ENCODE measurements at regions of chr7 and their contacts with region 1.

Region 1: GRCh38 chr7:141654551-141654950 is 47.4 kb downstream of the DENND11 start:
- DNase-seq: peak; percentile 70
- ATAC-seq: peak; percentile 94
- H3K4me3 ChIP-seq: no peak overlapping the region
- H3K27ac ChIP-seq: no peak overlapping the region
- H3K4me1 ChIP-seq: no peaks in the 10 kb centered on the region
- H3K27me3 ChIP-seq: no peaks in the 10 kb centered on the region
- CTCF ChIP-seq: peak; percentile 89
- EP300 ChIP-seq: no peak
- POLR2A ChIP-seq: no peak
- RAD21 ChIP-seq: peak; percentile 62; the same call in 1 of the 2 replicates

Region 2: DNA sequence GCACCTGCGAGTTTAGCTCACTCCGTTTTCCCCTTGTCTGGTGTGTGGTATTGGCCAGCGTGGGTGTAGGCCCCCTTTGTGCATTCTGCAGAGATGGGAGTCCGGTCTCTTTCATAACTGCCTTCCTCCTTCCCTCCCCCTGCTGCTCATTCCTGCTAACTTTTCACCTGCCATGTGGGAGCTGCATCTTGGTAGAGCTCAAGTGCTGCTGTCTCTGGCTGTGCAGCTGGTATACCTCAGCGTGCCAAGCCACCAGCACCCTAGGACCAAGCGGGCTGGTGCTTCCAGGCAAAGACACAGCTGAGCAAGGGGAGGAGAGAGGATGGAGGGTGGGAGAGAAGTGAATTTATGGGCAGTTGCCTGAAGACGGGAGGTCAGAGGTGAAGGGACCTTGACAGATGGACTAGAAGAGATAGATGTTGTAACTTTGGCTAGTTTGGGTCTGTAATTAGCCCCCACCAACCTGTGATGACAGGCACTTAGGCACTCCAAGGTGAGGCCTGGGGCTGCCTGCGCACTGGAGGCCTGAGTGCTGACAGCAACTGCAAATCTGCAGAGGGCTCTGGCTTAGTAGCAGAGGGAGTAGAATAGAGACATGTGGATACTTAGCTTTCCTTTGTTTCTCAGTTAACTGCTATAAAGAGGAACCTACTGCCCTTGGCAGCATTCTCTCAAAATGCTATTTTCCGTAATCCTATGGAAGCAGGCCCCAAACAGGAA is 252.1 kb before region 1 on chr7:
- CTCF ChIA-PET with region 1: no interaction called
- POLR2A ChIA-PET with region 1: no interaction called
- in situ Hi-C with region 1: no loop called
- intact Hi-C with region 1: no loop called
- DNase-seq: no peak
- ATAC-seq: no peak
- H3K4me3 ChIP-seq: no peak overlapping the region
- H3K27ac ChIP-seq: no peak overlapping the region
- H3K4me1 ChIP-seq: no peaks in the 10 kb centered on the region
- H3K27me3 ChIP-seq: peaks cover 4 to 10% of the 10 kb centered on the region in 2 experiments; a peak in 3 of 5 replicates
- CTCF ChIP-seq: no peak
- EP300 ChIP-seq: no peak
- POLR2A ChIP-seq: no peak
- RAD21 ChIP-seq: no peak

Region 3: GRCh38 chr7:141533149-141533949 is 121.2 kb before region 1 on chr7:
- CTCF ChIA-PET with region 1: no interaction called
- POLR2A ChIA-PET with region 1: no interaction called
- in situ Hi-C with region 1: no loop called
- intact Hi-C with region 1: loop called (anchors 1 kb)
- DNase-seq: peak; percentile 47
- ATAC-seq: peak; percentile 86
- H3K4me3 ChIP-seq: no peak overlapping the region
- H3K27ac ChIP-seq: no peak overlapping the region
- H3K4me1 ChIP-seq: no peaks in the 10 kb centered on the region
- H3K27me3 ChIP-seq: peaks cover 0 to 5% of the 10 kb centered on the region in 2 experiments; a peak in 2 of 5 replicates
- CTCF ChIP-seq: peak; percentile 85
- EP300 ChIP-seq: no peak
- POLR2A ChIP-seq: no peak
- RAD21 ChIP-seq: peak; percentile 75

Region 4: DNA sequence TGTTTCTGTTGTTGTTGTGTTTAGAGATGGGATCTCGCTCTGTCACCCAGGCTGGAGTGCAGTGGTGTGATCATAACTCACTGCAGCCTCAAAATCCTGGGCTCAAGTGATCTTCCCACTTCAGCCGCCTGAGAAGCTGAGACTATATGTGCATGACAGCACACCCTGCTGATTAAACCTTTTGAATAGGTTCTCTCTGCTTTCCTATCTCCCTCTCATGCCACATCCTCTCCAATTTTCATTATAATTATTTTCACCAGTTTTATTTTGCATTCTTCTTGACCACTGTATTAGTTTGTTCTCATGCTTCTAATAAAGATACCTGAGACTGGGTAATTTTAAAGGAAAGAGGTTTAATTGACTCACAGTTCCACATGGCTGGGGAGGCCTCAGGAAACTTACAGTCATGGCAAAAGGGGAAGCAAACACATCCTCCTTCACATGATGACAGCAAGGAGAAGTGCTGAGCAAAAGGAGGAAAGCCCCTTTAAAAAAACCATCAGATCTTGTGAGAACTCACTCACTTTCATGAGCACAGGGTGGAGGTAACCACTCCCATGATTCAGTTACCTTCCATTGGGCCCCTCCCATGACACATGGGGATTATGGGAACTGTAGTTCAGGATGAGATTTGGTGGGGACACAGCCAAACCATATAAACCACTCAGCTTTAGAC is 90.5 kb before region 1 on chr7:
- CTCF ChIA-PET with region 1: no interaction called
- POLR2A ChIA-PET with region 1: no interaction called
- in situ Hi-C with region 1: no loop called
- intact Hi-C with region 1: no loop called
- DNase-seq: no peak
- ATAC-seq: no peak
- H3K4me3 ChIP-seq: no peak overlapping the region
- H3K27ac ChIP-seq: no peak overlapping the region
- H3K4me1 ChIP-seq: no peaks in the 10 kb centered on the region
- H3K27me3 ChIP-seq: no peaks in the 10 kb centered on the region
- CTCF ChIP-seq: no peak
- EP300 ChIP-seq: no peak
- POLR2A ChIP-seq: no peak
- RAD21 ChIP-seq: no peak

Region 5: DNA sequence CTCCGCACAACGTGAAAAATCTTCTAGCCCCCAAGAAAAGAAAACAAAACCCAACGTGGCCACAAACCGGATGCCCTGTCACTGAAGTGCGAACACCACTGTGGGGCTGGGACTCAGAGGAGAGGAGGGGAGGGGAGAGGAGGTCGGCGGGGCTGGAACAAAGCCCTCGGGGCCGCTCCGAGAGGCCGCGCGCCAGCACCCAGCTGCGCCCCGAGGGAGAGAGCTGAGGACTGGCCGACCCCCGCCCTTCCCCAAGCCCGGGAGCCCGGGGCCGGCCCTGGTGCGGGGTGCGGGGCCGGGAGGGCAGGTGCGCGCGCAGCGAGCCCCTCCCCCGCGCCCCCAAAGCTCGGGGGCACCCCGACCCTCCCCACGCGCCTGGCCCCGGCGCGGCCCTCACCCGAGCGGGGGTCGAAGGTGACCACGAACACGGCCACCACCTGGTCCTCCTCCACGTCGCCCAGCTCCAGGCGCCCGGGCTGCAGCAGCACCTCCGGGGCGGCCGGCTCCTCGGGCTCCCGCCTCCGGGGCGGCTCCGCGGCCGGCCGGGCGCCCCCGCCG is 47.0 kb after region 1 on chr7:
- CTCF ChIA-PET with region 1: no interaction called
- POLR2A ChIA-PET with region 1: interaction called, 3 read pairs
- in situ Hi-C with region 1: no loop called
- intact Hi-C with region 1: loop called (anchors 1 kb)
- DNase-seq: no peak
- ATAC-seq: peak; percentile 86
- H3K4me3 ChIP-seq: peak overlapping the region; percentile 72 to 85 (median 76); a peak in 5 of 6 replicates
- H3K27ac ChIP-seq: no peak overlapping the region
- H3K4me1 ChIP-seq: peaks cover 49% of the 10 kb centered on the region
- H3K27me3 ChIP-seq: peaks cover 0 to 19% of the 10 kb centered on the region in 2 experiments; a peak in 3 of 5 replicates
- CTCF ChIP-seq: no peak
- EP300 ChIP-seq: no peak
- POLR2A ChIP-seq: peak in 1 of 2 experiments; percentile 10; a peak in 2 of 4 replicates
- RAD21 ChIP-seq: no peak

Region 6: GRCh38 chr7:141710301-141710700 is 55.8 kb after region 1 on chr7:
- CTCF ChIA-PET with region 1: interaction called, 3 read pairs
- POLR2A ChIA-PET with region 1: no interaction called
- in situ Hi-C with region 1: no loop called
- intact Hi-C with region 1: loop called (anchors 1 kb)
- DNase-seq: no peak
- ATAC-seq: no peak
- H3K4me3 ChIP-seq: no peak overlapping the region
- H3K27ac ChIP-seq: no peak overlapping the region
- H3K4me1 ChIP-seq: peaks cover 10% of the 10 kb centered on the region
- H3K27me3 ChIP-seq: peaks cover 0 to 3% of the 10 kb centered on the region in 2 experiments; a peak in 2 of 5 replicates
- CTCF ChIP-seq: no peak
- EP300 ChIP-seq: no peak
- POLR2A ChIP-seq: no peak
- RAD21 ChIP-seq: no peak

Region 7: GRCh38 chr7:141737834-141738591 is 83.5 kb after region 1 on chr7 and contains the start of gene SSBP1:
- CTCF ChIA-PET with region 1: interaction called, 16 read pairs
- POLR2A ChIA-PET with region 1: no interaction called
- in situ Hi-C with region 1: loop called (anchors 10 kb)
- intact Hi-C with region 1: loop called (anchors 1 kb)
- DNase-seq: peak; percentile 94
- ATAC-seq: peak; percentile 95
- H3K4me3 ChIP-seq: peak within 1 kb of the TSS; percentile 84 to 93 (median 85)
- H3K27ac ChIP-seq: peak within 1 kb of the TSS; percentile 81
- H3K4me1 ChIP-seq: peaks cover 29% of the 10 kb centered on the region
- H3K27me3 ChIP-seq: no peaks in the 10 kb centered on the region; a peak in 1 of 5 replicates
- CTCF ChIP-seq: peak; percentile 84
- EP300 ChIP-seq: peak; percentile 48 to 70; a peak in 2 of 4 replicates
- POLR2A ChIP-seq: peak; percentile 94 to 97
- RAD21 ChIP-seq: no peak
- total RNA-seq, gene SSBP1: 254 and 363 TPM in 2 replicates

Region 8: GRCh38 chr7:141785706-141786552 is 131.4 kb after region 1 on chr7:
- CTCF ChIA-PET with region 1: interaction called, 9 read pairs
- POLR2A ChIA-PET with region 1: no interaction called
- in situ Hi-C with region 1: no loop called
- intact Hi-C with region 1: loop called (anchors 1 kb)
- DNase-seq: peak; percentile 42
- ATAC-seq: peak; percentile 83
- H3K4me3 ChIP-seq: no peak overlapping the region
- H3K27ac ChIP-seq: no peak overlapping the region
- H3K4me1 ChIP-seq: no peaks in the 10 kb centered on the region
- H3K27me3 ChIP-seq: no peaks in the 10 kb centered on the region
- CTCF ChIP-seq: peak; percentile 72
- EP300 ChIP-seq: no peak
- POLR2A ChIP-seq: no peak
- RAD21 ChIP-seq: peak; percentile 17; the same call in 1 of the 2 replicates